ENCODE measurements at regions of chr6 and their contacts with region 1.

Region 1: GRCh38 chr6:44642870-44643529 is 255.5 kb downstream of the CDC5L start:
- DNase-seq: no peak
- ATAC-seq: no peak

Region 2: DNA sequence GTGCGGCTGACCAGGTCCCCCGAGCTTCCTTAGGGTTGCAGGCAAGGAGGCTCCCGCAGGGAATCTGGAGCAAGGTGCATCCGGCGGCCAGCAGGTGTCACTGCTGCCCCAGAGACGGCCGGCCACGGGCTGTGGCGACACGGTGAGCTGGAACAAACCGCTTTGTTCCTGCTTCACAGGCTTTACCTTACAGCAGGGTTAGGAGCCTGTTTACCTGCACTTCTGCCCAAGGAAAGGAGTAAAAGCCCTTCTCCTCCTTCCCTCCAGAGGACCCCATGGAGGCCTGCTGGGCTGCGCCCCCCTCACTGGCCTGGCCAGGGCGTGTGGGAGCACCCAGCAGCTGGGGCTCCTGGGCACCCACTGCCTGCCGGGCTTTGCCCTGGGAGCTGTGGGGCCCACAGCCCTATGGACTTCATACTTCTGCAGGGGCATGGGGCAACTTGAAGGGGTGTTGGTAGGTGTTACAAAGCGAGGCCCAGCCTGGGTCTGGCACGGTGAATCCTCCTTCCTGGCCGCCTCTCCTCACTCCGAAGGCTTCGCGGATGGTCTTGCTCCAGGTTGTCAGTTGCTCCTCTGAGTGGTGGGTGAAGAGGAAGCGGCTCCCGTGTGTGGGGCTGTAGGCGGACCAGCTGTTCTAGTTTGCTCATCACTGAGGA is 167.1 kb before region 1 on chr6:
- intact Hi-C with region 1: loop called (anchors 10 kb)
- DNase-seq: peak; percentile 86
- ATAC-seq: peak; percentile 83

Region 3: GRCh38 chr6:44527181-44527580 is 115.8 kb before region 1 on chr6:
- intact Hi-C with region 1: no loop called
- DNase-seq: no peak
- ATAC-seq: no peak

Region 4: GRCh38 chr6:44858998-44859397 is 216.0 kb after region 1 on chr6:
- intact Hi-C with region 1: no loop called
- DNase-seq: no peak
- ATAC-seq: no peak